GM12878 (cell line): ENCODE measurements at regions of chr1 and their contacts with region 1.

Region 1: DNA sequence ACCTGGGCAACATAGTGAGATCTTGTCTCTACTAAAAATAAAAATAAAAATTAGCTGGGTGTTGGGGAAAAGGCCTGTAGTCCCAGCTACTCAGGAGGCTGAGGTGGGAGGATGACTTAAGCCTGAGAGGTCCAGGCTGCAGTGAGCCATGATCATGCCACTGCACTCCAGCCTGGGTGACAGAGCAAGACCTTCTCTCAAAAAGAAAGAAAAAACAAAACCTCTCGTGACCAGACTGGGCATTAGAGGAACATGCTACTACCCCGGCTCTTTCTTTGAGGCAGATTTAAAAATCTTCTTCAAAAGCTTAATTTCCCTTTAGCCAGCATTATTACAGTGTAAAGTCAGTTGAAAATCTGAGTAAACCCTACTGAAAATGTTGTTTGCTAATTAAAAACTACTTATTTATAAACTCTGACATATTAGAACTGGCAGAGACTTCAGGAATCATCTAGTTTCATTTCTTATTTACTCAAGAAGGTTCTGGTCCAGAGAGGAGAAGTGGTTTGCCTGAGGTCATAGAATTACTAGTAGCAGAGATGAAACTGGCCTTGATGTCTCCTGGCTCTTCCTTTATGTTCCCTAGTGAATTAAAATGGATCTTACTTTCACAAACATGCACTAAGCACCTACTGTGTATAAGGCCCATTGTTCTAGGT is 11.6 kb upstream of the ELAVL4 start:
- DNase-seq: no peak
- ATAC-seq: no peak
- H3K4me3 ChIP-seq: no peak overlapping the region
- H3K27ac ChIP-seq: no peak overlapping the region; the same call in 1 of the 2 replicates
- H3K4me1 ChIP-seq: no peaks in the 10 kb centered on the region
- H3K27me3 ChIP-seq: no peaks in the 10 kb centered on the region
- CTCF ChIP-seq: no peak
- EP300 ChIP-seq: no peak
- POLR2A ChIP-seq: no peak
- RAD21 ChIP-seq: no peak

Region 2: GRCh38 chr1:50047916-50048694 is 49.0 kb before region 1 on chr1:
- CTCF ChIA-PET with region 1: no interaction called
- POLR2A ChIA-PET with region 1: no interaction called
- RAD21 ChIA-PET with region 1: no interaction called
- SMC1A ChIA-PET with region 1: no interaction called
- in situ Hi-C with region 1: no loop called
- intact Hi-C with region 1: loop called (anchors 1 kb)
- DNase-seq: no peak
- ATAC-seq: no peak; the same call in 2 of the 3 replicates
- H3K4me3 ChIP-seq: no peak overlapping the region
- H3K27ac ChIP-seq: no peak overlapping the region
- H3K4me1 ChIP-seq: no peaks in the 10 kb centered on the region
- H3K27me3 ChIP-seq: peaks cover 0 to 5% of the 10 kb centered on the region in 2 experiments; a peak in 2 of 4 replicates
- CTCF ChIP-seq: no peak
- EP300 ChIP-seq: no peak
- POLR2A ChIP-seq: no peak
- RAD21 ChIP-seq: no peak

Region 3: DNA sequence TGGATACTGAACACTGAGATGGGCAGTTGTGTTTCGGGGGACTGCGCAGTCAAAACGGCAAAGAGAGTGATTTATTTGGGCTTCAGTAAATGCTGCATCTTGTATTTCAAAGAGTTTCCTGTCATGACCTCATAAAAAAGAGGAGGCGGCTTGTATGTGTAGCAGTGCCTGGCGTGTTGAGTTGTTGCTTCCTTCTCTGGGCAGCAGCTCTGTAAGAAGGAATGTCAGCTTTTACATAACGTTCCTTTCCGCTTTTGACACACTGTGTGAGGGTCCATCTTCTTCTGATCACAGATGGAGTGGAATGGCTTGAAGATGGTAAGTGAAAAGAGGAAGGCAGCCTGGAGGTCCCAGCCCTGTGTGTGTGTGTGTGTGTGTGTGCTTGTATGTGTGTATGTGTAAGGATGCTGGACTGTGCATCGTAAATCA is 12.5 kb after region 1 on chr1:
- CTCF ChIA-PET with region 1: no interaction called
- POLR2A ChIA-PET with region 1: no interaction called
- RAD21 ChIA-PET with region 1: no interaction called
- SMC1A ChIA-PET with region 1: no interaction called
- in situ Hi-C with region 1: no loop called
- intact Hi-C with region 1: no loop called
- DNase-seq: no peak
- ATAC-seq: peak; percentile 21; the same call in 2 of the 3 replicates
- H3K4me3 ChIP-seq: no peak overlapping the region
- H3K27ac ChIP-seq: no peak overlapping the region
- H3K4me1 ChIP-seq: peaks cover 4% of the 10 kb centered on the region; the same call in 1 of the 2 replicates
- H3K27me3 ChIP-seq: no peaks in the 10 kb centered on the region; a peak in 3 of 4 replicates
- CTCF ChIP-seq: no peak
- EP300 ChIP-seq: no peak
- POLR2A ChIP-seq: no peak
- RAD21 ChIP-seq: no peak

Region 4: DNA sequence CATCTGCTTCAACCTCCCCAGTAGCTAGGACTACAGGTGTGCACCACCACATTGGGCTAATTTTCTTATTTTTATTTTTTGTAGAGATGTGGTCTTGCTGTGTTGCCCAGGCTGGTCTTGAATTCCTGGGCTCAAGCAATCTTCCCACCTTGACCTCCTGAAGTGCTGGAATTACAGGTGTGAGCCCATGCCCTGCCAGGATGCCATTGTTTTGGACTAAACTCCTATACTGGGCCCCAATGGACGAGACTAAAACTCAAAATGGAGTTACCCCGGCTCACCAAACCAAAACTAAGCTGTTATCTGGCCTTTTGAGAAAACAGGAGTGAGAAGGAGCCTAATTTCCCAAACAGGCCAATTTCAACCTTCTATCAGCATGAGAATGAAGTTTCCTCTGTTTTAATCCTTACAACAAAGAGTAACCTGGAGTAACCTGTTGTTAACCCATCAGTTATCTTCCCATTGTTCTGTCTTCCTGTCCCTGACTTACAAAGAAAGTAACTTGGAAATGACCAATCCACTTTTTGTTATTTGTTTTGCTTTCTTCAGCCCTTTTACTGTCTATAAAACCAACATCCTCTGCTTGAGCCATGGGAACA is 296.5 kb after region 1 on chr1:
- CTCF ChIA-PET with region 1: no interaction called
- POLR2A ChIA-PET with region 1: no interaction called
- RAD21 ChIA-PET with region 1: no interaction called
- SMC1A ChIA-PET with region 1: no interaction called
- in situ Hi-C with region 1: no loop called
- intact Hi-C with region 1: no loop called
- DNase-seq: no peak
- ATAC-seq: no peak
- H3K4me3 ChIP-seq: no peak overlapping the region
- H3K27ac ChIP-seq: no peak overlapping the region
- H3K4me1 ChIP-seq: no peaks in the 10 kb centered on the region
- H3K27me3 ChIP-seq: no peaks in the 10 kb centered on the region
- CTCF ChIP-seq: no peak
- EP300 ChIP-seq: no peak
- POLR2A ChIP-seq: no peak
- RAD21 ChIP-seq: no peak